Activated T-helper 1 cell treated with anti-CD3 and anti-CD28 coated beads, Interleukin-12 subunit alpha, Interleukin-12 subunit beta, Interleukin-2, Interleukin-4 antibody, amounts not matched to agents 30 ng/mL and 10 ng/mL and 1 ng/mL, durations not matched to agents 14 hours and 24 hours and 36 hours (primary cell): ENCODE measurements at regions of chr4 and their contacts with region 1.

Region 1: GRCh38 chr4:116866106-116866505 is 219.3 kb downstream of the TRAM1L1 start:
- DNase-seq: no peak
- H3K4me3 Mint-ChIP-seq: no peak overlapping the region
- H3K27ac Mint-ChIP-seq: no peak overlapping the region
- H3K4me1 Mint-ChIP-seq: no peaks in the 10 kb centered on the region
- H3K27me3 Mint-ChIP-seq: no peaks in the 10 kb centered on the region

Region 2: GRCh38 chr4:116118221-116118620 is 747.9 kb before region 1 on chr4:
- intact Hi-C with region 1: loop called (anchors 5 kb)
- DNase-seq: no peak
- H3K4me3 Mint-ChIP-seq: no peak overlapping the region
- H3K27ac Mint-ChIP-seq: no peak overlapping the region
- H3K4me1 Mint-ChIP-seq: no peaks in the 10 kb centered on the region
- H3K27me3 Mint-ChIP-seq: no peaks in the 10 kb centered on the region